SK-N-SH (cell line): ENCODE measurements at regions of chr1 and their contacts with region 1.

Region 1: DNA sequence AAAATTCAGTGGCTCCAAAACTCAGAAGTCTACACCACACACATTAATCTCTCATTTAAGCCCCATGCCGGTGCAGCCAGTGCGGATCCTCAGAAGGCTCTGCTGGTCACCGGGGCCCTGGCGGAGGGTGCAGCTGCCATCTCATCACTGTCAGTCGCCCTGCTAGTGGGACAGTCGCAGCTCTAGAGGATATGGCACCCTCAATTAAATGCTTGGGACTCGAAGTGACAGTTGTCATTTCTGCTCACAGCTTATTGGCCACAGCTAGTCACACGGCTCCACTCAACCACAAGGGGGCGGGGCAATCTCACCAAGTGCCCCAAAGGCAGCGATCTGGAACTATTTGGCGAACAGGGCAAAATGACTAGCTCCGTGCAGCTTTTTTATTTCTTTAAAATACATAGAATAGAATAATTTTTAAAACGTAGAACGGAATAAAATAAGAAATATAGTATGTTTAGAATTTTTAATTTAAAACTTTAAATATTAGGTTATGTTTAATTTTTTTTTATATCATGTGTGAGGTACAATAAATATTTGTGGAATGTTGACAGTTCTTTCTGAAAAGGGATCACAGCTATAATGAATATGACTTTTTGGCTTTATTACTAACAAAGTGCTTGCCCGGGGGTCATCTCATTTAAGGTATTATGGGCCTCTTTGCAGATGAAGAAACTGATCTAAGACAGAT is 8.0 kb upstream of the MAN1C1 start:
- DNase-seq: peak; percentile 85
- H3K4me3 ChIP-seq: peak overlapping the region; percentile 39 to 57; a peak in 3 of 4 replicates
- H3K27ac ChIP-seq: no peak overlapping the region
- H3K4me1 ChIP-seq: peaks cover 0 to 13% of the 10 kb centered on the region in 2 experiments; a peak in 1 of 4 replicates
- H3K27me3 ChIP-seq: peaks cover 29% of the 10 kb centered on the region
- CTCF ChIP-seq: peak; percentile 60
- EP300 ChIP-seq: no peak
- RAD21 ChIP-seq: peak; percentile 82

Region 2: DNA sequence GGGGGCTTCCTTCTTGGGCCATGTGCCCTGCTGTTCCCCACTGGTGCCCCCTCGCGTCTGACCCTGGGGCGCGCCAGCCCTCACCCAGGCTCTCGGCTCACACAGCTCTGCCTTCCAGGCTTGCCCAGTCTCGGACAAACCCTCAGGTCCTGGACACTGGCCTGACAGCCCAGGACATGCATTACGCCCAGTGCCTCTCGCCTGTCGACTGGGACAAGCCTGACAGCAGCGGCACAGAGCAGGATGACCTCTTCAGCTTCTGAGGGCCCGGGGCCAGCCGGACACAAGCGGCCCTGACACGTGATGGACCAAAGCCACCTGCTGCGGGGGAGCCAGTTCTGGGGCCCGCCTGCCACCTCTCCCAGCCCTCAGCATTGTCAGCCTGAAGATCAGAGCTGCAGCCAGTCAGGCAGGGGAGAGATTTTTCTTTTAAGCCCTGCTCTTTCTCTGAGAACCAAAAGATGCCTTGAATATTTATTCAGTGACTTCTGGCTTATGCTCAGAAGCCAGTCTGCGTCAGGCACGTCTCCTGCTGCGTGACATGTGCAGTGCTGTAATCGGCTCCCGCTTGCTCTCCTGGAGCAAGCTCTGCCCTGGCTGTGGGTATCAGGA is 41.8 kb before region 1 on chr1:
- CTCF ChIA-PET with region 1: interaction called, 10 read pairs
- POLR2A ChIA-PET with region 1: interaction called, 3 read pairs
- DNase-seq: peak; percentile 54
- H3K4me3 ChIP-seq: no peak overlapping the region
- H3K27ac ChIP-seq: no peak overlapping the region
- H3K4me1 ChIP-seq: peaks cover 0 to 11% of the 10 kb centered on the region in 2 experiments; a peak in 3 of 4 replicates
- H3K27me3 ChIP-seq: no peaks in the 10 kb centered on the region
- CTCF ChIP-seq: no peak
- EP300 ChIP-seq: no peak
- RAD21 ChIP-seq: no peak

Region 3: DNA sequence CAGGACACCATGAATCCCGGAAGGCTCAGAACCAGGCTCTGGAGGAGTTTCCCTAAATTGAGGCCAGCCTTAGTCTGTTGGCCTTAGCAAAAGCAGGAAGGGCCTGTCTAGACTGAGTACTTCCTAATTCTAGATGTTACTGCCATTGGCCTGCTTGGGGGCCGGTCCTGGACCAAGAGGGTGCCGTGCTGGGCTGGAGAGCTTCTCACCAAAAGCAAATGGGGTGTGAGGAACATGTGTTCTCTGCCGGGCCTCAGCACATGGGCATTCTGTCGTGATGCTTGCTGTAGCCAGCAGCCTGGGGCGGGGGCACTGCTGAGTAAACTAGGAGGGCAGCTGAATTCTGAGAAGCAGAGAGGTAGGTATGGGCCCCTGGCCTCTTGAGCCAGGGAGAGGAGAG is 27.7 kb before region 1 on chr1:
- CTCF ChIA-PET with region 1: interaction called, 18 read pairs
- POLR2A ChIA-PET with region 1: interaction called, 3 read pairs
- DNase-seq: no peak
- H3K4me3 ChIP-seq: no peak overlapping the region
- H3K27ac ChIP-seq: no peak overlapping the region
- H3K4me1 ChIP-seq: peaks cover 0 to 19% of the 10 kb centered on the region in 2 experiments; a peak in 1 of 4 replicates
- H3K27me3 ChIP-seq: no peaks in the 10 kb centered on the region
- CTCF ChIP-seq: no peak
- EP300 ChIP-seq: no peak
- RAD21 ChIP-seq: no peak

Region 4: DNA sequence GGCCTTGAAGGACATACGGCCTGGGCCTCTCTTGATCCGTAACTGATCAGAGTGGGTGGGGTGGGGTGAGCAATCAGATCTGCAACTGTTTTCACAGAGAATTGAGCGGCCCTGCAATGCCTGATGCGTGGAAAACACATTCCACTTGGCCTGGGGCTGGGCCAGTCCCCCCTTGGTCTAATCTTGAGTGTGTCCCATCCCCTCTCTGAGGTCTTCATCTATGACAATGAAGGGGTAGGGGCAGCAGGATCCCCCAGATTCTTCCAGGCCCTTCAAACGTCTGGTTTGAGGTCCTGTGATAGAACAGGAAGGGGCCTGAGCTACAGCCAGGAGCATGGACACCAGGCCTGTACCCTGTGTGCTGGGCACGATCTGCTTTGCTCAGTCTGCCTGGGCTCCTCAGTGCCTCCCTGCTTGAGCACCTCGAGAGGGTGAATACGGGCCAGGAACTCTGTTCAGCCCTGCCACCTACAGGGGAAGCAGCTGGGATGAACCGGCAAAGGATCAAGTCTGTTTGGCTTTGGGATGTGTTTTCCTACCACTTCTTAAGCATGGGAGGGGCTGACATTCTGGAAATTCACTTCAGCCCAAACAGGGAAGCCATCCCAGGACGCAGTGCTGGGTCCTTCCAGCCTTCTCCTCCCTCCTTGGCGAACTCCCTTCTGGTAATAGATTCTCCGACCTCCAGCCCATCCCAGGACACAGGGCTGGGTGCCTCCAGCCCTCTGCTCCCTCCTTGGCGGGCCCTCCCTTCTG is 135.4 kb after region 1 on chr1:
- CTCF ChIA-PET with region 1: interaction called, 17 read pairs
- POLR2A ChIA-PET with region 1: no interaction called
- DNase-seq: peak; percentile 69
- H3K4me3 ChIP-seq: no peak overlapping the region
- H3K27ac ChIP-seq: peak overlapping the region in 1 of 2 experiments; percentile 54; a peak in 1 of 4 replicates
- H3K4me1 ChIP-seq: peaks cover 0 to 40% of the 10 kb centered on the region in 2 experiments; a peak in 1 of 4 replicates
- H3K27me3 ChIP-seq: no peaks in the 10 kb centered on the region
- CTCF ChIP-seq: 0 out of 2 replicates have a peak, but pooled peaks have one; percentile 27
- EP300 ChIP-seq: no peak
- RAD21 ChIP-seq: peak; percentile 76

Region 5: GRCh38 chr1:25802915-25803314 is 194.3 kb after region 1 on chr1:
- CTCF ChIA-PET with region 1: interaction called, 76 read pairs
- POLR2A ChIA-PET with region 1: interaction called, 7 read pairs
- DNase-seq: peak; percentile 53
- H3K4me3 ChIP-seq: no peak overlapping the region
- H3K27ac ChIP-seq: no peak overlapping the region
- H3K4me1 ChIP-seq: peaks cover 0 to 40% of the 10 kb centered on the region in 2 experiments; a peak in 3 of 4 replicates
- H3K27me3 ChIP-seq: no peaks in the 10 kb centered on the region
- CTCF ChIP-seq: no peak
- EP300 ChIP-seq: no peak
- RAD21 ChIP-seq: peak; percentile 36; the same call in 1 of the 2 replicates

Region 6: GRCh38 chr1:25819576-25820246 is 211.1 kb after region 1 on chr1 and contains the start of gene MTFR1L:
- CTCF ChIA-PET with region 1: interaction called, 15 read pairs
- POLR2A ChIA-PET with region 1: interaction called, 5 read pairs
- DNase-seq: peak; percentile 98
- H3K4me3 ChIP-seq: peak within 1 kb of the TSS; percentile 95 to 97
- H3K27ac ChIP-seq: peak within 1 kb of the TSS; percentile 79 to 88
- H3K4me1 ChIP-seq: peaks cover 8 to 29% of the 10 kb centered on the region in 2 experiments; a peak in 1 of 4 replicates
- H3K27me3 ChIP-seq: no peaks in the 10 kb centered on the region
- CTCF ChIP-seq: no peak
- EP300 ChIP-seq: no peak
- RAD21 ChIP-seq: no peak
- polyA plus RNA-seq, gene MTFR1L: 53.6 and 61.2 TPM in 2 replicates